ENCODE measurements at regions of chr1 and their contacts with region 1.

Region 1: DNA sequence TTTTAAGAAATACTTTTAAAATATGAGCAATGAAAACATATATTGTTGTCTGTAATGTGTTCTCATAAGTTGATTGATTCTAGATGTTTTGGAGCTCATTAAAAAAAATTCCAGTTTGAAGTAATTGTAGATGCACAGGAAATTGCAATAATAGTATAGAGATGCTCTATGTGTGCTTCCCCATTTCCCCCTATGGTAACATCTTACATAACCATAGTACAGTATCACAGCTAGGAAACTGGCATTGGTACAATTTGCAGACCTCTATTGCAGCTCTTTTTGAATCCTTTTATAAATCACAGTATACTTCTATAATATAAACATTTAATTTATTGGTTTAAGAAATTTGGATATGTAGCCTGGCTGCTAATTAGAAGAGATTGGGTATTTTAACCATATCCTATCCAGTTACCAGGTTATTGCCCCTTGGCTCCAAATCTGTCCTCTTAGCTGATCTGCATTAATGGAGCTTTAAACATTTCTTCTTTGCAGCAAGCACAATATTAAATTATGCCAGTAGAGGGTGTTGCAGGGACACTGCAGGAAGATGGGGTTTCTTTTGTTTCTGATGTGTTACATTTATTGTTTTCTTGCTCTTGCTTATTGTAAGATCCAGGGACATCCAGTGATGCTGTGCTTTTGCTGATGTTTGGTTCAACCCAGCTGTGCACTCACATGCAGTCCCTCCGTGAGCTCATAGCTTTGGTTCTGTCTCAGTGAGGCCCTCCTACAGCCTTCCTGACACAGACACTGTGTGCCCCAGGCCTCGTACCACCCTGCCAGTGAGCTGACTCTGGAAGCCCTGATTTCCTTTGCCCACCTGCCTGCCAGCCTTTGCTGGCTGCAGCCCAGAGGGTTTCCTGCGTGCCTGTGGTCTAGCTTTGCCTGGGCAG is 103.3 kb downstream of the RABGAP1L start:
- DNase-seq: peak in 39 of 42 donors; percentile 3 to 80 (median 45)

Region 2: DNA sequence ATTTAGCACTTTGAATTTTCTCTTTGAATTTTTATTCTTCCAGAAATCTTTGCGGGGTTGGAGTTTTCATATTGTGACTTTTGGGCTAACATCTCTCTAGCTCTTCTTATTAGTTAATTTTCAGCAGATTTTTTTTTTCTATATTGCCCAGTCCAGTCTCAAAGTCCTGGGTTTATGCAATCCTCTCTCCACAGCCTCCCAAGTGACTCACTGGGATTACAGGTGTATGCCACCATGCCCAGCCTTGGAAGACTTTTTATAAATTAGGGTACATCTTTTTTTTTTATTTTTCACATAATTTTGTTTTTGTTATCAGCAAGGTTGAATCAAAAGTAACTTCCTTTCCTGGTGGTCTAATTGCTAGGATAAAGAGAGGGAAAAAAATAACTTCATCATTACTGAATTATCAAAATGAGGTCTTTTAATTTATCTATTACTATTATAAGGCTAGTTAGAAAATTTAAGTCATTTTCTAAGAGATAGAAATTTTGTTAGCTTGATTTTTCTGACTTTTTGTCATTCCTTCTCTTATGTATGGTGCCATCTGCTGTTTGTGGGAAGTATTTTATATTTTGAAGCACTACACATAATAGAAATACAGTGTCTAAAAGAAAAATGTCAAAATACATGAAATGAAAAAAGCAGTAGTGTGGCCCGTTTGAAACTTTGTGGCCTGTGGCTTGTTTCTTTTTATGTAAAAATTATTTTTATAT is 463.7 kb after region 1 on chr1:
- intact Hi-C with region 1: loop called (anchors 5 kb)
- DNase-seq: no peak

Region 3: GRCh38 chr1:174743654-174744561 is 481.3 kb after region 1 on chr1:
- intact Hi-C with region 1: loop called (anchors 5 kb)
- DNase-seq: no peak

Region 4: GRCh38 chr1:174999216-174999925 is 736.8 kb after region 1 on chr1:
- intact Hi-C with region 1: loop called (anchors 10 kb)
- DNase-seq: peak; percentile 96 to 99 (median 98)